PC-9 (cell line): ENCODE measurements at regions of chr3 and their contacts with region 1.

Region 1: GRCh38 chr3:42547401-42547945 is 34.3 kb downstream of the SEC22C start:
- DNase-seq: peak in 1 of 2 experiments; percentile 55
- H3K4me3 ChIP-seq: no peak overlapping the region
- H3K27ac ChIP-seq: no peak overlapping the region
- H3K4me1 ChIP-seq: 0 out of 2 replicates have a peak, but pooled peaks cover 9% of the 10 kb centered on the region
- H3K27me3 ChIP-seq: no peaks in the 10 kb centered on the region
- CTCF ChIP-seq: peak; percentile 90

Region 2: GRCh38 chr3:41975421-41976103 is 571.9 kb before region 1 on chr3:
- CTCF ChIA-PET with region 1: no interaction called
- POLR2A ChIA-PET with region 1: no interaction called
- intact Hi-C with region 1: no loop called
- DNase-seq: no peak
- H3K4me3 ChIP-seq: no peak overlapping the region
- H3K27ac ChIP-seq: no peak overlapping the region
- H3K4me1 ChIP-seq: no peaks in the 10 kb centered on the region
- H3K27me3 ChIP-seq: no peaks in the 10 kb centered on the region
- CTCF ChIP-seq: no peak

Region 3: DNA sequence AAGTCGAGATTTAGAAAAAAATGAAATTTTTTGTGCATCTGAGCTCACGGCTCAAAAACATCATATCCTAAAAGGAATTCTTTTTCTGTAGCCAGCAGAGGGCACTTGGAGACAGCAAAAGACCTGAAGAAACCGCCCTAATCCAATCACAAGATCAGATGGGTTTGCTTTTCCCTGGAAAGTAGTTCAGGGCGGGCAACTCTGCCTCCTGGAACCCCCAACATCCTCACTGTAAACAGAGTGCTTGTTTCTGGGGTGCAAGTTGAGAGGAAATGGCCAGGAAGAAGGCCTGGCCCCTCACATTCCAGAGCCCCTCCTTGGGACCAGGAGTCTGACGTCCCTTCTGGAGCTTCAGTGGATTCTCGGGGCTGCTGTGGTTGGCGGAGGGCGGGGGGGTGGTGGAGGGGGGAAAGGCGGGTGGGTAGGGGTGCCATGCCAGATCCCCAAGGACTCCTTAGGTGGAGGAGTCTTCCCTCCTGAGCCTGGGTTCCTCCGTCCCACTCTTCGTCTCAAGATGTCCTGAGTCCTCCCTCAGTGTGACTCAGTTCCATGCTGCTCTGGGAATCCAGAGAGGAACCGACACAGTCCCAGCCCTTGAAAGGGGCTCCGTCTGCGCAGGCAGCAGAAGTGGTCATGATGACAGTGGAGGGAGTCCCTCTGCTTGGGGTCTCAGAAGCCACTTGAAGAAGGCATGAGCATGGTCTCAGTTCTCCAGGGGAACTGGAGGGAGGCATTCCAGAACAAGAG is 317.4 kb before region 1 on chr3:
- CTCF ChIA-PET with region 1: interaction called, 3 read pairs
- POLR2A ChIA-PET with region 1: no interaction called
- intact Hi-C with region 1: loop called (anchors 2 kb)
- DNase-seq: peak; percentile 30 to 42
- H3K4me3 ChIP-seq: no peak overlapping the region
- H3K27ac ChIP-seq: no peak overlapping the region
- H3K4me1 ChIP-seq: no peaks in the 10 kb centered on the region
- H3K27me3 ChIP-seq: no peaks in the 10 kb centered on the region
- CTCF ChIP-seq: peak; percentile 71

Region 4: DNA sequence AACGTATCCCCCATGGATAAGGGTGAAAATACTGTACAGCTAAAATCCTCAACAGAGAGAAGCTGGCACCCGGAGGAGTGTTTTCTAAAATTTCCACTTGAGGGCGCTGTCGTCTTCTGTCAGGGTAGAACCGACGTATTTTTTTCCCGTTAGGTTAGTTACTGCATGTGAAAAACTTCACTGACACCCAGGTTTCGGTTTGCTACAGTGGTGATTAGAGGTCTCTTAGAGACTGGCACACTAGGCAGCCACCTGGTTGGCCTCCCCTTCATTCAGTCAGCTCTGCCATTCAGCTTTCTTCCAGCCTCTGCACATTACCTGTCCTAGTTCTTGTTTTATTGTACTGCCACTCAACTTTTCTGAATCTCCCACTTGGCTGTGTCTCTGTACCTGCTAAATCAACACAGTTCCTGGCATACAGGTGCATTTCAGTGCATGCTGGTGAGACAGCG is 299.9 kb before region 1 on chr3:
- CTCF ChIA-PET with region 1: interaction called, 6 read pairs
- POLR2A ChIA-PET with region 1: no interaction called
- intact Hi-C with region 1: loop called (anchors 1 kb)
- DNase-seq: peak; percentile 53 to 64
- H3K4me3 ChIP-seq: no peak overlapping the region
- H3K27ac ChIP-seq: no peak overlapping the region
- H3K4me1 ChIP-seq: no peaks in the 10 kb centered on the region
- H3K27me3 ChIP-seq: 0 out of 2 replicates have a peak, but pooled peaks cover 7% of the 10 kb centered on the region
- CTCF ChIP-seq: peak; percentile 86

Region 5: DNA sequence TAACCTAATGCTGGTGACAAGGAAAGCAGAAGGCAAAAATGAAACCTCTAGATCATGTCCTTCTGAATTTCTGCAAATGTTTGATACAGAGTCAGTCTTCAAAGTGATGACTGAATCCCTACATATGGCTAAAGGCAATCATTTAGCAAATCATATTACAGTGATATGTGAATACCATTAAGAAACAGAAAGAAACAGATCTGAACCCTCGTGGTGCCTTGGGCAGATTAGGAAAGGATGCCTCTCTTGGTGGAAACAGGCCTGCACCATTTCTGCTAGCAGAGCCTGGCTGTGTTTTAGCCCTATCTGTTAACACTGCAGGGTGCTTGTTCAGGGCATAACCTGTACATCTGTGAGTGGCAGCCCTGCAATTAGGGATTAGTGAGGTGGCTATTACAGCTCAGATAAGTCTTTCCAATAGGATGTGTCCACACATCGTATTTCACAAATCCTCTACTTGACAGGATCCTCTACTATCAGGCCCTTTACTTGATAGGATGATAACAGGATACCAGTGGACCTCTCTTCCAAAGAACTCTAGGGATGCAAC is 22.2 kb after region 1 on chr3:
- CTCF ChIA-PET with region 1: no interaction called
- POLR2A ChIA-PET with region 1: no interaction called
- intact Hi-C with region 1: no loop called
- DNase-seq: no peak
- H3K4me3 ChIP-seq: no peak overlapping the region
- H3K27ac ChIP-seq: no peak overlapping the region
- H3K4me1 ChIP-seq: no peaks in the 10 kb centered on the region
- H3K27me3 ChIP-seq: no peaks in the 10 kb centered on the region
- CTCF ChIP-seq: no peak